ENCODE measurements at regions of chr19 and their contacts with region 1.

Region 1: GRCh38 chr19:2648528-2648937 is 54.0 kb downstream of the GNG7 start:
- DNase-seq: peak; percentile 53 to 84 (median 76)
- ATAC-seq: peak; percentile 99
- H3K4me3 ChIP-seq: no peak overlapping the region
- H3K4me3 Mint-ChIP-seq: no peak overlapping the region
- H3K27ac ChIP-seq: no peak overlapping the region
- H3K27ac Mint-ChIP-seq: no peak overlapping the region
- H3K4me1 ChIP-seq: no peaks in the 10 kb centered on the region
- H3K4me1 Mint-ChIP-seq: peaks cover 2% of the 10 kb centered on the region
- H3K27me3 ChIP-seq: no peaks in the 10 kb centered on the region
- H3K27me3 Mint-ChIP-seq: no peaks in the 10 kb centered on the region
- CTCF ChIP-seq: peak; percentile 97

Region 2: DNA sequence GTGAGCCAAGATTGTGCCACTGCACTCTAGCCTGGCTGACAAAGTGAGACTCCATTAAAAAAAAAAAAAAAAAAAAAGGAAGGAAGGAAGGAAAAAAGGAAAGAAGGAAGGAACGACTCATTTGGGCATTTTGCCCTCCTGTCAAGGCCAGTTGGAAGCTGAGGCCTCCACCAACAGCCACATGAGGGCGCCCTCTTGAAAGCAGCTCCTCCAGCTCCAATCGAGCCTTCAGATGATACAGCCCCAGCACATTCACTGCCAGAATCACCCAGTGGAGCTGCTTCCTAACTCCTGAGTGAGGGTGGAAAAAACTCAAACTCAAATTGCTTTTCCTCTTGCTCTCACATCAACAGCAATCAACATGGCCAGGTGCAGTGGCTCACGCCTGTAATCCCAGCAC is 13.1 kb after region 1 on chr19:
- CTCF ChIA-PET with region 1: interaction called, 10 read pairs
- POLR2A ChIA-PET with region 1: no interaction called
- intact Hi-C with region 1: no loop called
- DNase-seq: no peak
- ATAC-seq: no peak
- H3K4me3 ChIP-seq: no peak overlapping the region
- H3K4me3 Mint-ChIP-seq: no peak overlapping the region
- H3K27ac ChIP-seq: no peak overlapping the region
- H3K27ac Mint-ChIP-seq: no peak overlapping the region
- H3K4me1 ChIP-seq: no peaks in the 10 kb centered on the region
- H3K4me1 Mint-ChIP-seq: no peaks in the 10 kb centered on the region
- H3K27me3 ChIP-seq: no peaks in the 10 kb centered on the region
- H3K27me3 Mint-ChIP-seq: no peaks in the 10 kb centered on the region
- CTCF ChIP-seq: no peak

Region 3: DNA sequence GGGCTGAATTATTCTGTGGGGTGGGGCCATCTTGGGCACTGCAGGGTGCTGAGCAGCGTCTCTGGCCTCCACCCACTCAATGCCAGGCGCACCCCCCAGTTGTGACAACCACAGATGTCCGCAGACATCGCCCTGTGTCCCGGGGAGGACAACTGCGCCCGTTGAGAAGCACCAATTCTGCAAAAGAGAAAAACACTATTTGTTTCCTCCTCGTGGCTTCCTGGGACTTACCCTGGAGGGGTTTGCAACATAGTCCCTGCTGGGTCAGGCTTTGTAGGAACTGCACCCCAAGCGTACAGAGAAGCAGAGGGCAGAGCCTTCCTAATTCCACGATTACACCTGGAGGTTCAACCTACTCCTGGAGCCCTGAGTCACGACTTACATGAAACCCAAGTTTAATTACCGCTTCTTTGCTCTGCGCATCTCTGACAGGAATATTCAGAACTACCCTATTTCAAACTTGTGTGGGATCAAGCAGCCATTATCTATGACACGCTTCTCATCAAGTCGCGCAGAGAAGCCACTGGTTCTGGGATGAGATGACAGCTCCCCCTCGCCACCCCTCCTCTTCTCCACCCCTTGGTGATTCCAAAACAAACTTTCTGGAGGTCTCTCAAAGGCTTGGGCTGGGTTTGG is 102.4 kb after region 1 on chr19:
- CTCF ChIA-PET with region 1: interaction called, 90 read pairs
- POLR2A ChIA-PET with region 1: interaction called, 7 read pairs
- intact Hi-C with region 1: loop called in 1 of 2 experiments (anchors 1 kb)
- DNase-seq: no peak
- ATAC-seq: no peak
- H3K4me3 ChIP-seq: no peak overlapping the region
- H3K4me3 Mint-ChIP-seq: no peak overlapping the region
- H3K27ac ChIP-seq: no peak overlapping the region
- H3K27ac Mint-ChIP-seq: no peak overlapping the region
- H3K4me1 ChIP-seq: peaks cover 4% of the 10 kb centered on the region
- H3K4me1 Mint-ChIP-seq: no peaks in the 10 kb centered on the region
- H3K27me3 ChIP-seq: peaks cover 0 to 3% of the 10 kb centered on the region in 2 experiments
- H3K27me3 Mint-ChIP-seq: no peaks in the 10 kb centered on the region
- CTCF ChIP-seq: no peak

Region 4: GRCh38 chr19:2867025-2867991 is 218.8 kb after region 1 on chr19 and contains the start of gene ZNF556:
- CTCF ChIA-PET with region 1: interaction called, 15 read pairs
- POLR2A ChIA-PET with region 1: no interaction called
- intact Hi-C with region 1: loop called in 1 of 2 experiments (anchors 1 kb)
- DNase-seq: peak in 1 of 9 experiments; percentile 13
- ATAC-seq: no peak
- H3K4me3 ChIP-seq: no peak within 1 kb of the TSS
- H3K4me3 Mint-ChIP-seq: no peak within 1 kb of the TSS
- H3K27ac ChIP-seq: no peak within 1 kb of the TSS
- H3K27ac Mint-ChIP-seq: no peak within 1 kb of the TSS
- H3K4me1 ChIP-seq: no peaks in the 10 kb centered on the region
- H3K4me1 Mint-ChIP-seq: peaks cover 8% of the 10 kb centered on the region
- H3K27me3 ChIP-seq: peaks cover 0 to 2% of the 10 kb centered on the region in 2 experiments
- H3K27me3 Mint-ChIP-seq: peaks cover 10% of the 10 kb centered on the region
- CTCF ChIP-seq: no peak
- total RNA-seq, gene ZNF556: not detected

Measured in CD8-positive, alpha-beta T cell (primary cell).